Panc1 (cell line): ENCODE measurements at regions of chr14 and their contacts with region 1.

Region 1: DNA sequence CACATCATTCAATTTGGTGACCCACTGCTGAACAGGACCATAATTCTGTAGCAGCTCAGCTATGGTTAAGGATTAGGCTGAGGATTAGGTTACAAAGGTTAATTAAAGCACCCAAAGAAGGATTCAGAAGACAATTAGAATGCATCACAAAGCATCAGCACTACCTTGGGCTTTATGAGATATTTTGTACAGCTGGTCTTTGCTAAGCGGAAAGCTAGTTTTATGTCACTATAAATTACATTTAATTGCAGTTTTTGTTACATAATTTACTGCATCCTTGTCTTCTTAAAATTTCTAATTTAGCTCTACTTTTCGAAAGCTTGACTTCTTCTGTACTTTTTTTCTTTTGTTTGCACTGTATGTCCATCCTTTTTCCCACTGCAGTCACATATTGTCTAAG is 711.5 kb downstream of the RPS29 start:
- DNase-seq: no peak
- ATAC-seq: no peak
- H3K4me3 ChIP-seq: no peak overlapping the region
- H3K27ac ChIP-seq: no peak overlapping the region
- H3K4me1 ChIP-seq: no peaks in the 10 kb centered on the region
- H3K27me3 ChIP-seq: no peaks in the 10 kb centered on the region
- CTCF ChIP-seq: no peak

Region 2: DNA sequence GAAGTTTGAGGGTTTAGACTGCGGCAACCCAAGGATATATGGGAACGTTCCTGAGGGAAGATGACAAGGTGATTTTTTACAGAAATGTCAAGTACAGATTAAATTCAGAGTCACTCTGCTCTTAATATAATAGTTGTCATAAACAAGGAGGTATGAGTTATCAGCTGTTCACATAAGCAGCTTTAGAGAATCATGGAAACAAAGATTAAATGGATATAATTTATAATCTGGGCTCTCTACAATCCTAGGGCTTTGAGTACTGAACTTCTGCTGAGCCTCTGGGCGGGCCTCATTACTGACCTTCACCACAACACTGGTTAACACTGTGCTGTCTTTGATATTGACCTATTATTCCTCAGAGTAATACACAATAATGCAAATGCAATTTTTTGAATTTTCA is 133.7 kb after region 1 on chr14:
- CTCF ChIA-PET with region 1: no interaction called
- POLR2A ChIA-PET with region 1: no interaction called
- in situ Hi-C with region 1: no loop called
- intact Hi-C with region 1: no loop called
- DNase-seq: no peak
- ATAC-seq: no peak
- H3K4me3 ChIP-seq: no peak overlapping the region
- H3K27ac ChIP-seq: no peak overlapping the region
- H3K4me1 ChIP-seq: no peaks in the 10 kb centered on the region
- H3K27me3 ChIP-seq: no peaks in the 10 kb centered on the region
- CTCF ChIP-seq: no peak

Region 3: GRCh38 chr14:49114161-49114893 is 239.6 kb after region 1 on chr14:
- CTCF ChIA-PET with region 1: no interaction called
- POLR2A ChIA-PET with region 1: no interaction called
- in situ Hi-C with region 1: no loop called
- intact Hi-C with region 1: no loop called
- DNase-seq: no peak
- ATAC-seq: no peak
- H3K4me3 ChIP-seq: no peak overlapping the region
- H3K27ac ChIP-seq: no peak overlapping the region
- H3K4me1 ChIP-seq: no peaks in the 10 kb centered on the region
- H3K27me3 ChIP-seq: no peaks in the 10 kb centered on the region
- CTCF ChIP-seq: no peak

Region 4: DNA sequence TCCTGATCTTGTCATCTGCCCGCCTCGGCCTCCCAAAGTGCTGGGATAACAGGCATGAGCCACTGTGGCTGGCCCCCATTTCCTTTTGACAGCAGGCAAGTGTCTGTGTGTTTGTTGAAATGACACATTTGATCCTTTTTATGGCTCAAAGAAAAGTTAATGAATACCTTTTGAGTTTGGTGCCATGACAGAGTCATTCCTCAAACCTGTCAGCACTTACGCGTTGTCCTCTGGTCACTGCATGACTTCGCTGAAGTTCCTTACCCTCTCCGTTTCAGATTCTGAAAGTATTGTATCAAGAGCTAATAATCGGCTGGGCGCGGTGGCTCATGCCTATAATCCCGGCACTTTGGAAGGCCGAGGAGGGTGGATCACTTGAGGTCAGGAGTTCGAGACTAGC is 945.5 kb after region 1 on chr14:
- CTCF ChIA-PET with region 1: no interaction called
- POLR2A ChIA-PET with region 1: interaction called, 14 read pairs
- in situ Hi-C with region 1: no loop called
- intact Hi-C with region 1: no loop called
- DNase-seq: no peak
- ATAC-seq: no peak
- H3K4me3 ChIP-seq: no peak overlapping the region
- H3K27ac ChIP-seq: no peak overlapping the region
- H3K4me1 ChIP-seq: no peaks in the 10 kb centered on the region
- H3K27me3 ChIP-seq: no peaks in the 10 kb centered on the region
- CTCF ChIP-seq: no peak